BJ (cell line): ENCODE measurements at regions of chr6 and their contacts with region 1.

Region 1: DNA sequence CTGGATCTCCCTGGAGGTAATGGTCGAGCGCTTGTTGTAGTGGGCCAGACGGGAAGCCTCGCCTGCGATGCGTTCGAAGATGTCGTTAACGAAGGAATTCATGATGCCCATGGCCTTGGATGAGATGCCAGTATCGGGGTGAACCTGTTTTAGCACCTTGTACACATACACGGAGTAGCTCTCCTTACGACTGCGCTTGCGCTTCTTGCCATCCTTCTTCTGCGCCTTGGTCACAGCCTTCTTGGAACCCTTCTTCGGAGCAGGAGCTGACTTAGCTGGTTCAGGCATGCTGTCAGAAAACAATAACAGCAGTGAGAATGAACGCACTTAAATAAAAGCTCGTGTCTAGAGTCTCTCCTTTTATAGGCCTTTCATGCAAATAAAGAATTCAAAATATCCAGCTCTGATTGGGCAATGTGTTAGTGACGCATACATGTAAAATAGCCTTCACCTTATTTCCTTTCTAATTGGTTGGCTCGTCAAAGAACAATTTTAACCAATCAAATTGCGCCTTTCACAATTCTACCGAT is 129.2 kb downstream of the HFE start:
- DNase-seq: peak; percentile 100
- H3K4me3 ChIP-seq: peak overlapping the region; percentile 59
- H3K27me3 ChIP-seq: no peaks in the 10 kb centered on the region
- CTCF ChIP-seq: no peak

Region 2: DNA sequence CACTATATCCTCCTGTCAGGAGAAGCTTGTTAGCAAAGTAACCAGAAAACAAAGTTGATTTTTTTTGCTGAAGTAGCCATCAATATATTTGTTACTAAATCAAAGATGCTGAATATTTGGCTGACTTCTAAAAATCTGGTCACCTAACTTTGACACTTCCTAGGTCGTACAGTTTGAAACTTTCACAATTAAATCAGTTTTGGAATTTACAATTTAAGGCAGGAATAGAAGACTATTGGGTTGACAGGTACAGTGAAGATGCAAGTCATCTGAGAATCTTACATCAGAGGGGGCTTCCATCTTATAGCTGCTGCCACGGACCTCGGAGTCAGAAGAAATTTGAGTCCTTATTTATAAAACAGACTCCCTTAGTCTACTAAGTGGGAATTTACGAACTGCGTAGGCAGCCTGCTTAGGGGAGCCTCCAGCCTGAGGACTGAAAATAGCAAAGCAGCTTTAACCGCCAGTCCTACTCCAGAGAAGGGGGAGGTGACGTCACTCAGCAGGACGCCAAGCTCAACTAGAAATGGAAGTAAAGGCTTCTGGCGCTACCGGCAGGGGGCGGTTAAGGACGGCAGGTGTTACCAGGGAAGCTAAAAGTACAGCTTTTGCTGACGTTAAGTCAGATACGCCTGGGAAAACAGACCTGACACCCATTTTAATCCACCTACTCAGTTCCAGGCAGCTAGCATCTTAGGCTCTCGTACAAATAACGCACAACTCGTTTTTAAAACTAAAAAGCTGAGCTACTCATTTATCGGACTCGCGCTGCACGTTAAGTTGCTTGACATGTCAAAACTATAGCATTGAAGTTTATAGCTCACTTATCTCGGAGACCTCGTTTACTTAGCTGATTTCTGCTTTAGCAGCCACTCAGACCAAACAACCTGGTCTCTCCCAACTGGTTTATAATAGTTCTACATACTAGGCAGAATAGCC is 190.3 kb before region 1 on chr6:
- CTCF ChIA-PET with region 1: no interaction called
- POLR2A ChIA-PET with region 1: interaction called, 12 read pairs
- DNase-seq: peak; percentile 78
- H3K4me3 ChIP-seq: peak overlapping the region; percentile 64
- H3K27me3 ChIP-seq: no peaks in the 10 kb centered on the region
- CTCF ChIP-seq: peak; percentile 95

Region 3: DNA sequence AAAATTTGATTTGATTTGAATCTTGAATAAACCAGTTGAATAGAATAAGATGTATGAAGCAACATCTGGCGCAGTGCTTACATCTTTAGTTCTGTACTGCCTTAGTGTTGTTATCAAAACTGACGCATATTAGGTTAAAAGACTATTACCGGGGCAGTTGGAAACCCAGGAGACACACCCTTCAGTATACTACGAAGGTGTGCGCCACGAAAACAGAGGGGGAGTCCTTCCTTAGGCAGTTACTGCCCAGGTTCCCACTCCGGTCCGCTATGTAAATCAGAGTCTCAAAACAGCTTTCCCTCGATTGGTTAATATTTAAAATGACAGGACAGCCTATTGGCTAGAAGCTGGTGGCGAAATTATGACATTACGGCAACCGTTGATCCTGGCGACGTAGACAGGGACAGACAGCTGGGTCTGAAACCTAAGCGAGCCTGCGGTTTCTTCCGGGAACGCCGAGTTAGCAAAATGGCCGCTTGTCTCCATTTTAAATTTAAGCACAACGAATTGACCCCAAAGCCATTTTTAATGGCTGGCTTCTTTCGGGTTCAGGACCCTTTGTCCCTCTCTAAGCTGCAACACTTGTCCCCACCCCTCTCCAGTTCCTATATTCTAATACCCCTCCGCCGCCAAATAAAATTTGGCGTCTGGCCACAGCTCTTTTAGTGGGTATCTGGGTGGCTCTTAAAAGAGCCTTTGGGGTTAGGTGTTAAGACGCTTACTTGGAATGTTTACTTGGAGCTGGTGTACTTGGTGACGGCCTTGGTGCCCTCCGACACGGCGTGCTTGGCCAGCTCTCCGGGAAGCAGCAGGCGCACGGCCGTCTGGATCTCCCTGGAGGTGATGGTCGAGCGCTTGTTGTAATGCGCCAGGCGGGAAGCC is 93.4 kb before region 1 on chr6:
- CTCF ChIA-PET with region 1: no interaction called
- POLR2A ChIA-PET with region 1: interaction called, 48 read pairs
- DNase-seq: peak; percentile 98
- H3K4me3 ChIP-seq: peak overlapping the region; percentile 59
- H3K27me3 ChIP-seq: no peaks in the 10 kb centered on the region
- CTCF ChIP-seq: no peak

Region 4: GRCh38 chr6:26183581-26184366 is 32.6 kb before region 1 on chr6:
- CTCF ChIA-PET with region 1: interaction called, 3 read pairs
- POLR2A ChIA-PET with region 1: interaction called, 15 read pairs
- DNase-seq: peak; percentile 92
- H3K4me3 ChIP-seq: peak overlapping the region; percentile 32
- H3K27me3 ChIP-seq: no peaks in the 10 kb centered on the region
- CTCF ChIP-seq: no peak

Region 5: DNA sequence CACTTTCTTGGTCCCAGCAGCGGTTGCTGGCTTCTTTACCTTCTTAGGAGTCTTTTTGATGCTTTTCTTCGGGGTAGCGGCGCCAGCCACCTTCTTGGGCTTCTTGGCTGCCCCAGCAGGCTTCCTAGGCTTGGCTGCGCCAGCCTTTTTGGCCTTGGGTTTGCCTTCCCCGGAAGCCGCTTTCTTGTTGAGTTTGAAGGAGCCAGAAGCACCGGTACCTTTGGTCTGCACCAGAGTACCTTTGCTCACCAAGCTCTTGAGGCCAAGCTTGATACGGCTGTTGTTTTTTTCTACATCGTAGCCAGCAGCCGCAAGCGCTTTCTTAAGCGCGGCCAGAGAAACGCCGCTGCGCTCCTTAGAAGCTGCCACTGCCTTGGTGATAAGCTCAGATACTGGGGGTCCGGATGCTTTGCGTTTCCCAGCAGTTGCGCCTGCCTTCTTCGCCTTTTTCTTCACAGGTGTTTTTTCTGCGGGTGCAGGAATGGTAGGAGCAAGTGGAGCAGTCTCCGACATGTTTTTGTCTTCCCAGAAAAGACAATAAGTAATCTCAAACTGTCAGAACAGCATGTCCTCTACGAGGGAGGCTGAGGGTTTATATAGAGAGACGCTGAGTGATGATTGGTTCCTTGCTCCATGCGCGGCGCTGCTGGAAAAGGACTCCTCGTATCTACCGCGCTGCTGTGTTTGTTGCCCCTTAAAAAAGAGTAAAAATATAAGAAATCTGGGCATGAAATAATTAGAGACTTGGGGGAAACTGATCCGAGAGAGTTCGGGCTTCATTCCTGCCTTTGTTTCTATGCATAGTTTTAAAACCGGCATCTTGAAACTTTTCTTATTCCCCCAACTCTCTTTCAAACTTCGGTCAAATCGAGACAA is 18.2 kb after region 1 on chr6:
- CTCF ChIA-PET with region 1: interaction called, 3 read pairs
- POLR2A ChIA-PET with region 1: interaction called, 10 read pairs
- DNase-seq: no peak
- H3K4me3 ChIP-seq: peak overlapping the region; percentile 37
- H3K27me3 ChIP-seq: no peaks in the 10 kb centered on the region
- CTCF ChIP-seq: no peak

Region 6: DNA sequence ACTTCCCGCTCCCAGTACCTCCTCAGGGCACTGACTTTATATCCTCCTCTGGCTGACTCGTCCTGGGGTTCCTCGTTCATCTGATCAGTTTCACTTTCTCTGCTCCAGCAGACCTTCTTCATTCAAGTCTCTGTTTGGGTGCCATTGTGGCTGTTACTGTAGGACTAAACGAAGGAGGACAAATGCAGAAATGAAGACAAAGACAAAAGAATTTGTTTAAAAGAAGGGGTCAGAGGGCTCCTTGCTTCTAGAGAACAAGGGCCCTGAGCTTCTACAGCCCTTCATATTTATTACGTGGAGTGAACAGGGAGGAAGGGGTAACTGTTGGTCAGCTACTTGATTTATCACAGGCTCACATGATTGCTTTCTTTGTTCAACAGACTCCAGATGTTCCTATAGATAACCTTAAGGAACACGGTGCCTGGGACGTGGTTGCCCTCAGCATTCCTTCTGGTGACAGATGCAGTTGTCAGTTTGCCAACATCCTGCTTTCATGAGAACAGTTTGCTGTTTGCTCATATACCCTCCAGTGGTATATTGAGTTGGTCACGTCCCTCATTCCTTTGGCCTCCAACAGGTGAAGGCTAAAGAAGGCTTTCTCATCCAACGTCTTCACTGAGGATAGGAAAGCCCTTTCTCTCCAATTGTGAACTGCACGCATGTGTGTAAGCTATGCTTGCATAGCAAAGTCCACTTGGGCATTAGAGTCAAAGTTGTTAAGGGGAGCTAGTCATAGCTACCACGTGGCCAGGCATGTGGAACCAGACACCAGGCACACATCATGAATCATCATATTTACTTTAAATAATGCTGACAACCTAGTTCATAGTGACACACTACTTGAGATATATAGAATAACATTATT is 79.5 kb after region 1 on chr6:
- CTCF ChIA-PET with region 1: no interaction called
- POLR2A ChIA-PET with region 1: no interaction called
- DNase-seq: no peak
- H3K4me3 ChIP-seq: no peak overlapping the region
- H3K27me3 ChIP-seq: no peaks in the 10 kb centered on the region
- CTCF ChIP-seq: no peak

Region 7: DNA sequence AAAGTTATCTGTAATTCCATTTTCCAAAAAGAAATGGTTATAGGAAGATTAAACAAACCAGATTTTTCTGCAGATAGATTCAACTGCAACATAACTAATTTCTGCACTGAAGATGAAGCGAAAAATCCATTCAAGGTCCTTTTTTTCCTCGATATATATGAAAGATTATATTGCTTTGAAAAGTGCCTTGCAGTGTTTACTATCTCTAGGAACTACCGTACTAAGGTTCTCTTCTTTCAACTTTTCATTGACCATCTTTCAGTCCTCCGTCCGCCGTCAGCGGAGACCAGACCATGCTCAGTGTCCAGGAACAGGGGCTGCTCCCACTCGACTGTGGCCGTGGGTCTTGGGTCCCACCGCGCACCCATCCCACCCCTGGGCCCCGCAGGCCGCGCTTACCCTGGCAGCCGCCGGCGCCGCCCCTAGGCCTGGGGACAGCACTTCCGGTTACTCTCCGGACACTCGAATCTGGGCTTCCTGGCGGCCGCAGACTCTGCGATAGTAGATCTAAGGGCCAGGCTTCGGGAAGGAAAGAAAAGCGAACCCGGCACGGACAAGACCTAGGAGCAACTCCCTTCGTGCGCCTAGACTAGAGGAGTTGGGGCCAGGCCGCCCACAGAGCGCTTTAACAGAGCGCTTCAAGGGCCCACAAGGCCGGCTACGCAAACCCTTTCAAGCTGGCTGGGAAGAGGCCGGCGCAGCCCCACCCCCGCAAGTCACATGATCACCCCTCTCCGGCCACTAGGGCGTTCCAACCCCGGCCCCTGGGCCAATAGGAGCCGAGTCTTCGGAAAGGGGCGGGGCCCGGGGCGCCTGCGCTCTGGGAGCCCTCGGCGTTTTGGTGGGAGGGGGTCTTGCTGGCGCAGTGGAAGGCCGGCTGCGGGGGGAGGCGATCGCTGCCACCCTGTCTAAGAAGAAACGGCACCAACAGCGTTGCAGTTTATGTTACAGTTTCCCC is 442.9 kb after region 1 on chr6 and contains the start of gene ZNF322:
- CTCF ChIA-PET with region 1: no interaction called
- POLR2A ChIA-PET with region 1: no interaction called
- DNase-seq: peak; percentile 55
- H3K4me3 ChIP-seq: peak within 1 kb of the TSS; percentile 97
- H3K27me3 ChIP-seq: no peaks in the 10 kb centered on the region; the same call in 1 of the 2 replicates
- CTCF ChIP-seq: no peak
- polyA plus RNA-seq, gene ZNF322: 13.5 and 13.9 TPM in 2 replicates

Region 8: GRCh38 chr6:27146706-27147505 is 930.5 kb after region 1 on chr6:
- CTCF ChIA-PET with region 1: no interaction called
- POLR2A ChIA-PET with region 1: interaction called, 28 read pairs
- DNase-seq: peak; percentile 100
- H3K4me3 ChIP-seq: peak overlapping the region; percentile 63
- H3K27me3 ChIP-seq: no peaks in the 10 kb centered on the region
- CTCF ChIP-seq: no peak